ENCODE measurements at regions of chr2 and their contacts with region 1.

Region 1: GRCh38 chr2:190849774-190850173 is 30.8 kb upstream of the GLS start:
- DNase-seq: peak; percentile 75
- H3K4me3 Mint-ChIP-seq: no peak overlapping the region
- H3K27ac Mint-ChIP-seq: peak overlapping the region; percentile 5
- H3K4me1 Mint-ChIP-seq: peaks cover 15% of the 10 kb centered on the region
- H3K27me3 Mint-ChIP-seq: no peaks in the 10 kb centered on the region
- CTCF ChIP-seq: no peak

Region 2: GRCh38 chr2:190838492-190838910 is 11.3 kb before region 1 on chr2:
- CTCF ChIA-PET with region 1: interaction called, 16 read pairs
- POLR2A ChIA-PET with region 1: interaction called, 3 read pairs
- intact Hi-C with region 1: no loop called
- DNase-seq: no peak
- H3K4me3 Mint-ChIP-seq: no peak overlapping the region
- H3K27ac Mint-ChIP-seq: no peak overlapping the region
- H3K4me1 Mint-ChIP-seq: peaks cover 54% of the 10 kb centered on the region
- H3K27me3 Mint-ChIP-seq: no peaks in the 10 kb centered on the region
- CTCF ChIP-seq: no peak

Region 3: GRCh38 chr2:190984595-190984994 is 134.8 kb after region 1 on chr2:
- CTCF ChIA-PET with region 1: no interaction called
- POLR2A ChIA-PET with region 1: no interaction called
- intact Hi-C with region 1: no loop called
- DNase-seq: peak; percentile 83
- H3K4me3 Mint-ChIP-seq: no peak overlapping the region
- H3K27ac Mint-ChIP-seq: no peak overlapping the region
- H3K4me1 Mint-ChIP-seq: peaks cover 7% of the 10 kb centered on the region
- H3K27me3 Mint-ChIP-seq: no peaks in the 10 kb centered on the region
- CTCF ChIP-seq: no peak

Region 4: DNA sequence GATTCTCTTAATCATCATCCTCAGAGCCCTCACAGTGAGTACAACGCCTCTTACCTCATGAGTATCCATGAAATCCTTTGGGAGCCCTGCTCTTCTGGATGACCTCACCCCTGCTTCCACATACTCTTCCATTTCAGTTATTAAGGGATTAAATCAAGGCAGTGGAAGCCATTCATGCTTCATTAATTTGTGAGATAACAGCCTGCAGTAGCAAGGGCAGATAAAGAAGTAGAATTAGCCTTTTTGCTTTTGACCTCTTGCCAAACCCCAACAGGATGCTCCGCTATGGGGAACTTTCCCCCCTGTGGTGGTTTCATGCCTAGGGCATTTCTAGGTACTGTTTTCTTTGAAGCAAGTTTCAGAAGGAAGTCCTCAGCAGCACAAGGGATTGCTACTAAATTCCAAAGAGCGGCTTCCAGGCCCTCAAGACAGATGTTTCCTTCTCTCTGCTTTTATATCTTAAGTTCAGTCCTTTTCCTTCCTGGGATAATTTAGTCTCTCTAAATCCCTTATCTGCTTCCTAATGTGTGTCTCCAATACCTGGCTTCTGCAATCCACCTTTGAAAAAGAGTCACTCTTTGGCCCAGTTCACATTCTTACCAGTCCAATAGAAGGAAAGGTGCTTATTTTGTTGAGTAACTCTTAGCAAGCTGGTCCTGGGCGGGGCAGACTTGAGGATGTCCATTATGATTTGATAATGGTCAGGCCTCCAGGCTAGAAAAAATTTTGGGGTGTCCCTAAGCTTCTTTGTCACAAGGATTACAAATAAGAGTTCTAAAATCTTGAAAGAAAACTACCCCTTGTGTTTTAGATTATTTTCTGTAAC is 472.3 kb after region 1 on chr2:
- CTCF ChIA-PET with region 1: no interaction called
- POLR2A ChIA-PET with region 1: no interaction called
- intact Hi-C with region 1: no loop called
- DNase-seq: peak; percentile 48
- H3K4me3 Mint-ChIP-seq: no peak overlapping the region
- H3K27ac Mint-ChIP-seq: peak overlapping the region; percentile 36
- H3K4me1 Mint-ChIP-seq: peaks cover 39% of the 10 kb centered on the region
- H3K27me3 Mint-ChIP-seq: no peaks in the 10 kb centered on the region
- CTCF ChIP-seq: no peak

Region 5: GRCh38 chr2:191333911-191334357 is 484.2 kb after region 1 on chr2:
- CTCF ChIA-PET with region 1: no interaction called
- POLR2A ChIA-PET with region 1: no interaction called
- intact Hi-C with region 1: no loop called
- DNase-seq: peak; percentile 63
- H3K4me3 Mint-ChIP-seq: peak overlapping the region; percentile 5
- H3K27ac Mint-ChIP-seq: peak overlapping the region; percentile 69
- H3K4me1 Mint-ChIP-seq: peaks cover 19% of the 10 kb centered on the region
- H3K27me3 Mint-ChIP-seq: no peaks in the 10 kb centered on the region
- CTCF ChIP-seq: no peak

Measured in MCF 10A (cell line).